T-cell (primary cell): ENCODE measurements at regions of chr12 and their contacts with region 1.

Region 1: DNA sequence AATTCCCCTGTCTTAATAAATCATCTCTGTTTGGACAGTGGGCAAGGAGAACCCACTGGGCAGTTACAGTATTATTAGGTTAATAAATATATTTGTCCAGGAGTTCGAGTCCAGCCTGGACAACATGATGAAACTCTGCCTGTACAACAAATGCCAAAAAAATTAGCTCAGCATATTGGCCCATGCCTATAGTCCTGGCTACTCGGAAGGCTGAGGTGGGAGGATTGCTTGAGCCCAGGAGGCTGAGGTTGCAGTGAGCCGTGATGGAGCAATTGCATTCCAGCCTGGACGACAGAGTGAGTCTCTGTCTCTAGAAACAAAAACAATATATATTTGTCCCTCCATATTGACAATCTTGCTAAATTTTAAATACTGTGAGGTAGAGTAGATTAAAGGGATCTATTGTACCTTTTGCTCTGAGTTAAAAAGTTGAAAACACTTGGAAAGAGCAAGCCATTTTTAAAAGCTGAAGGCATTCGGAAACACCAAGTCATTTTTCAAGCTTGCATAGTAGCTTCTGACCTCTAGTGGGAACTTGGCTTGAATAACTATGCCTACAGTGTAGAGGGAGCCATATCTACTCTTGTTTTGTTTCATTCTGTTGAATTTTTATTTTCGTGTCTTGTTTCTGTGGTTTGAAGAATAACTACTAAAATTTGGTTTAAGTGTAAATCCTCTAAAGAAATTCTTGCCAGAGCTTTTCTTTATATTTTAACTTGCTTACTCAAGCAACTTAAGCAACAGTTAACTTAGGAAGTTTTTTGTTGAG is 14.6 kb upstream of the EEA1 start:
- DNase-seq: no peak
- ATAC-seq: no peak
- H3K4me3 ChIP-seq: no peak overlapping the region
- H3K4me3 Mint-ChIP-seq: no peak overlapping the region
- H3K27ac ChIP-seq: no peak overlapping the region
- H3K27ac Mint-ChIP-seq: no peak overlapping the region
- H3K4me1 ChIP-seq: no peaks in the 10 kb centered on the region
- H3K4me1 Mint-ChIP-seq: peaks cover 0 to 2% (median 0%) of the 10 kb centered on the region in 3 donors
- H3K27me3 ChIP-seq: peaks cover 0 to 6% of the 10 kb centered on the region in 2 experiments
- H3K27me3 Mint-ChIP-seq: peaks cover 0 to 5% of the 10 kb centered on the region in 2 donors

Region 2: GRCh38 chr12:92794814-92795213 is 148.9 kb before region 1 on chr12:
- CTCF ChIA-PET with region 1: interaction called, 4 to 14 read pairs
- POLR2A ChIA-PET with region 1: no interaction called
- DNase-seq: no peak
- ATAC-seq: no peak
- H3K4me3 ChIP-seq: no peak overlapping the region
- H3K4me3 Mint-ChIP-seq: no peak overlapping the region
- H3K27ac ChIP-seq: no peak overlapping the region
- H3K27ac Mint-ChIP-seq: no peak overlapping the region
- H3K4me1 ChIP-seq: no peaks in the 10 kb centered on the region
- H3K4me1 Mint-ChIP-seq: peaks cover 12 to 18% (median 15%) of the 10 kb centered on the region in 3 donors
- H3K27me3 ChIP-seq: no peaks in the 10 kb centered on the region
- H3K27me3 Mint-ChIP-seq: no peaks in the 10 kb centered on the region

Region 3: GRCh38 chr12:92915365-92915764 is 28.3 kb before region 1 on chr12:
- CTCF ChIA-PET with region 1: no interaction called
- POLR2A ChIA-PET with region 1: no interaction called
- DNase-seq: no peak
- ATAC-seq: no peak
- H3K4me3 ChIP-seq: no peak overlapping the region
- H3K4me3 Mint-ChIP-seq: no peak overlapping the region
- H3K27ac ChIP-seq: no peak overlapping the region
- H3K27ac Mint-ChIP-seq: no peak overlapping the region
- H3K4me1 ChIP-seq: peaks cover 0 to 6% of the 10 kb centered on the region in 2 experiments
- H3K4me1 Mint-ChIP-seq: peaks cover 35 to 49% (median 49%) of the 10 kb centered on the region in 3 donors
- H3K27me3 ChIP-seq: no peaks in the 10 kb centered on the region
- H3K27me3 Mint-ChIP-seq: no peaks in the 10 kb centered on the region

Region 4: GRCh38 chr12:92955997-92956663 is 12.5 kb after region 1 on chr12:
- CTCF ChIA-PET with region 1: interaction called in 1 of 2 experiments, 7 read pairs
- POLR2A ChIA-PET with region 1: interaction called in 1 of 2 experiments, 11 read pairs
- DNase-seq: no peak
- ATAC-seq: no peak
- H3K4me3 ChIP-seq: no peak overlapping the region
- H3K4me3 Mint-ChIP-seq: no peak overlapping the region
- H3K27ac ChIP-seq: no peak overlapping the region
- H3K27ac Mint-ChIP-seq: no peak overlapping the region
- H3K4me1 ChIP-seq: no peaks in the 10 kb centered on the region
- H3K4me1 Mint-ChIP-seq: no peaks in the 10 kb centered on the region
- H3K27me3 ChIP-seq: peaks cover 0 to 2% of the 10 kb centered on the region in 2 experiments
- H3K27me3 Mint-ChIP-seq: no peaks in the 10 kb centered on the region

Region 5: DNA sequence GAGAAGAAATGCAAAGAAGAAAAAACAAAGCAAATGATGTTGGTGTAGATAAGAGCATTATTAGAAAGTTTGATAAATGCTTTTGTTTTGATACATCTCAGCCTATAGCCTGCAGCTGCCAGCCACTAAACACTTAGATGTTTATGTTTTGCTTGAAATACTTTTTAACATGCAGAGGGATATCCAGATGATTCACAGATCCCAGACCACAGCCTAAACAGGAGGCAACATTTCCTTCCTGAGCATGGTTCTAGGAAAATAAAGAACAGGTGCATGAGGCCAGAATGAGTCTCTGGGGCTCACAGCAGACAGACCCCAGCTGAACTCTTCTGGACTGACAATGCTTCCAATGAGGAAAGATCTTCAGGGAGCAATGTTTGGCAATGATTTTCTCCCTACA is 89.1 kb after region 1 on chr12:
- CTCF ChIA-PET with region 1: no interaction called
- POLR2A ChIA-PET with region 1: interaction called in 1 of 2 experiments, 14 read pairs
- DNase-seq: no peak
- ATAC-seq: no peak
- H3K4me3 ChIP-seq: no peak overlapping the region
- H3K4me3 Mint-ChIP-seq: no peak overlapping the region
- H3K27ac ChIP-seq: no peak overlapping the region
- H3K27ac Mint-ChIP-seq: no peak overlapping the region
- H3K4me1 ChIP-seq: no peaks in the 10 kb centered on the region
- H3K4me1 Mint-ChIP-seq: no peaks in the 10 kb centered on the region
- H3K27me3 ChIP-seq: peaks cover 0 to 2% of the 10 kb centered on the region in 2 experiments
- H3K27me3 Mint-ChIP-seq: peaks cover 7 to 9% of the 10 kb centered on the region in 2 donors

Region 6: GRCh38 chr12:93467351-93468007 is 523.8 kb after region 1 on chr12 and contains the start of gene MRPL42:
- CTCF ChIA-PET with region 1: no interaction called
- POLR2A ChIA-PET with region 1: interaction called in 1 of 2 experiments, 12 read pairs
- DNase-seq: peak; percentile 80 to 95 (median 90)
- ATAC-seq: peak; percentile 92 to 97 (median 94)
- H3K4me3 ChIP-seq: peak within 1 kb of the TSS; percentile 67 to 91
- H3K4me3 Mint-ChIP-seq: peak within 1 kb of the TSS; percentile 86 to 95 (median 91)
- H3K27ac ChIP-seq: peak within 1 kb of the TSS; percentile 72
- H3K27ac Mint-ChIP-seq: peak within 1 kb of the TSS; percentile 83 to 95
- H3K4me1 ChIP-seq: peaks cover 7 to 18% of the 10 kb centered on the region in 2 experiments
- H3K4me1 Mint-ChIP-seq: peaks cover 34 to 39% (median 37%) of the 10 kb centered on the region in 3 donors
- H3K27me3 ChIP-seq: no peaks in the 10 kb centered on the region
- H3K27me3 Mint-ChIP-seq: no peaks in the 10 kb centered on the region
- total RNA-seq, gene MRPL42: 35.1 to 46.7 (median 40.4) TPM